ENCODE measurements at regions of chr7 and their contacts with region 1.

Region 1: GRCh38 chr7:32891800-32892520 is 400 bp upstream of the KBTBD2 start:
- DNase-seq: peak; percentile 96 to 99
- ATAC-seq: peak; percentile 65 to 81 (median 66)
- H3K4me3 ChIP-seq: peak overlapping the region; percentile 80
- H3K4me3 Mint-ChIP-seq: peak overlapping the region; percentile 95
- H3K27ac ChIP-seq: peak overlapping the region; percentile 99
- H3K27ac Mint-ChIP-seq: peak overlapping the region; percentile 96 to 99
- H3K4me1 ChIP-seq: peaks cover 21% of the 10 kb centered on the region
- H3K4me1 Mint-ChIP-seq: peaks cover 51 to 54% of the 10 kb centered on the region in 2 donors
- H3K27me3 ChIP-seq: no peaks in the 10 kb centered on the region
- H3K27me3 Mint-ChIP-seq: peaks cover 0 to 3% of the 10 kb centered on the region in 2 donors
- CTCF ChIP-seq: no peak

Region 2: DNA sequence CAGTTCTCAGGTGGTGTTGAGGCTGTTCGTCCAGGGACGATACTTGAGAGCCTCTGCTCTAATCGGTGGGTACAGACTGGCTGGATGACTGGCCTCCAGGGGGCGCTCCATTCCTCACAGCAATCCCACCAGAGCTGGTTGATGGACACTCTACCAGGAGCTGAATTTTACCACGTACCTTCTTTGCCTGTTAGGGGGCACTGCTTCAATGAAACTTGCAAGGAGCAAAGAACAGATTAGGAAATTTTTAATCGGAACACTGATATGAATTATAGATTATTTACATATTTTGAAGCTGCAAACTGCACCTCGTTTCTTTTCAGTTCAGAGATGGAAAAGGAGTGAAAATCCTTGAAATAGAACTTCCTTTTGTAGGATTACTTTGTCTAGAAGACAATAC is 45.3 kb before region 1 on chr7:
- intact Hi-C with region 1: loop called (anchors 5 kb)
- DNase-seq: peak; percentile 86 to 94
- ATAC-seq: peak; percentile 100
- H3K4me3 ChIP-seq: no peak overlapping the region
- H3K4me3 Mint-ChIP-seq: no peak overlapping the region
- H3K27ac ChIP-seq: no peak overlapping the region
- H3K27ac Mint-ChIP-seq: peak overlapping the region in 1 of 2 donors; percentile 44
- H3K4me1 ChIP-seq: peaks cover 4% of the 10 kb centered on the region
- H3K4me1 Mint-ChIP-seq: peaks cover 7 to 8% of the 10 kb centered on the region in 2 donors
- H3K27me3 ChIP-seq: peaks cover 2% of the 10 kb centered on the region
- H3K27me3 Mint-ChIP-seq: peaks cover 16 to 27% of the 10 kb centered on the region in 2 donors
- CTCF ChIP-seq: peak; percentile 87

Region 3: DNA sequence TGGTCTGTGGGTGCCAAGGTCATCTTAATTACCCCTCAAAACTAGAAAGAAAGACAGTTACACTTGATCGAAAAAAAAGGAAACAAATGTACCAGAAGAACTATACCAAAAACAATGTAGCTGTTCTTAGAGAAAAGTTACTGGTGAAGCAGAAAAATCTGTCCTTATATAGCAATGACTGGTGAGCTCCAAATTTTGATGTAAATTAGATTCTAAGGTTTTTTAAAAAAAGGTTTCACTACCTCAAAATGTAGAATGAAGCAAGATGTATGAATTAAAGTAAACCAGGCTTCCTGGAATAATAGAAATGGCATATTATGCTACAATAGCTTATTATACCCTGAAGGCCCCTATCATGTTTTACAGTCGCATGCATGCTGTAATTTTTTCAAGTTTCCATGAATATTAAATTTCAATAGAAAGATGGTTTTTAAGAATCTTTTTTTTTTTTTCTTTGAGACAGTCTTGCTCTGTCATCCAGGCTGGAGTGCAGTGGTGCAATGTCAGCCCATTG is 36.9 kb after region 1 on chr7:
- intact Hi-C with region 1: no loop called
- DNase-seq: no peak
- ATAC-seq: no peak
- H3K4me3 ChIP-seq: no peak overlapping the region
- H3K4me3 Mint-ChIP-seq: no peak overlapping the region
- H3K27ac ChIP-seq: no peak overlapping the region
- H3K27ac Mint-ChIP-seq: no peak overlapping the region
- H3K4me1 ChIP-seq: no peaks in the 10 kb centered on the region
- H3K4me1 Mint-ChIP-seq: no peaks in the 10 kb centered on the region
- H3K27me3 ChIP-seq: no peaks in the 10 kb centered on the region
- H3K27me3 Mint-ChIP-seq: no peaks in the 10 kb centered on the region
- CTCF ChIP-seq: no peak

Region 4: DNA sequence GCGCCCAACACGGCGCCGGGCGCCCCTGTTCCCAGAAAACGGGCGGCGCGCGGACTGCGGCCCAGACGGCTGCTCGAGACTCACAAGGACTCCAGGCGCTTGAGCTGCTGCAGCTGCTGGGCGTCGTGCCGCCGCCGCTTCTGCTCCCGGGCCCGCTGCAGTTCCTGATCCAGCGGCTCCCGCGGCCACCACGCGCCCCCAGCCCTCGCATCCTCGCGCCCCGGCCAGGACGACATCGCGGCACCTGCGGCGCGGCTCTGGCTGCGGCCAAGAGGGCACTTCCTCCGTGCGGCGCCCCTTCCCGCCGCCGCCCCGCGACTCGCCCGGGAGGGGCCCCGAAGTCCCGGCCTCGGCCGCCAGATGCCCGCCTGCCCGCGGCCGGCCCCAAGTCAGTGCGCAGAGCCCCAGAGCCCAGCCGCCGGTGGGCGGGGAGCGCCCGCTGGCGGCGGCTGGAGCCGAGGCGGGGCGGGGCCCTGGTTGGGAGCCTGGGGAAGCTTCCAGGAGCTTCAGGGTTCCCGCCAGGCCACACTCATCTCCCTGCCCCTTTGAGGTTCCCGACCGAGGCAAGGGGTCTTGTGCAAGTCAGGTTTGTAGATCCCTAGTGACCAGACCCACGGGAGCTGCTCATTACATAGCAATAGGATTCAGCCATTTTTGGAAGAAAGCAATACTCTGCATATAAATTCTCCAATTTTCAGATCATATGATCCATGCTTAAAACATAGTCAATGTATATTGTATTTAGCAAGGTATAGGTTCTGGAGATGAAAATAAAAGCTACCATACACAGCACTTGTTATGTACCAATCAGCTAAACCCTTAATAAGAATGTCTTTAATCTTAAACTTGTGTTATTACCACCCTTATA is 51.1 kb after region 1 on chr7:
- intact Hi-C with region 1: loop called (anchors 5 kb)
- DNase-seq: peak; percentile 61 to 82
- ATAC-seq: peak; percentile 90 to 92 (median 92)
- H3K4me3 ChIP-seq: peak overlapping the region; percentile 66
- H3K4me3 Mint-ChIP-seq: peak overlapping the region; percentile 97
- H3K27ac ChIP-seq: peak overlapping the region; percentile 57
- H3K27ac Mint-ChIP-seq: peak overlapping the region in 1 of 2 donors; percentile 78
- H3K4me1 ChIP-seq: peaks cover 11% of the 10 kb centered on the region
- H3K4me1 Mint-ChIP-seq: peaks cover 11 to 16% of the 10 kb centered on the region in 2 donors
- H3K27me3 ChIP-seq: no peaks in the 10 kb centered on the region
- H3K27me3 Mint-ChIP-seq: peaks cover under 1 to 12% of the 10 kb centered on the region in 2 donors
- CTCF ChIP-seq: peak; percentile 61

Region 5: DNA sequence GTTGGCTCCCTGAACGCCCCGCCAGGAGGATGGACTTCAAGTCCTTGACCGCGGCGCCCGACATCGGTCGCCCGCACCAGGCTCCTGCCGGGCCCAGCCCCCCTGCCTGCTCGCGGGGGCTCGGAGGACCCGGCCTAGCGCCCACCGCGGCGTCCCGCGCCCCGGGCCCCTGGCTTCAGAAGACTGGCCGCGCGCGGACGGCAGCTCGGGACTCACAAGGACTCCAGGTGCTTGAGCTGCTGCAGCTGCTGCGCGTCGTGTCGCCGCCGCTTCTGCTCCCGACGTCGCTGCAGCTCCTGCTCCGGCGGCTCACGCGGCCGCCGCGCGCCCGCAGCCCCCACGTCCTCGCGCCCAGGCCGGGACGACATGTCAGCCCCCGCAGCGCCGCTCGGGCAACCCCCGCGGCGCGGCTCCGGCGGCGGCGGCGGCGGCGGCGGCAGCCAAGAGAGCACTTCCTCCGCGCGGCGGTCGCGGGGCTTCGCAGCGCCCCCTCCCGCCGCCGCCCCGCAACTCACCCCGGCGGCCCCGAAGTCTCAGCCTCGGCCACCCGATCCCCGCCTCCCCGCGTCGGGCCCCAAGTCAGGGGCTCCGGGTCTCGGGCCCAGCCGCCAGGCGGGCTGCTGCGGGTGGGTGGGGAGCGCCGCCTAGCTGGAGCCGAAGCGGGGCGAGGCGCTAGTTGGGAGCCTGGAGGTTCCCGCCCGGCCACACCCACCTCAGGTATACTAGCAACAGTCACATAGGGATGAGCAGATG is 217.2 kb after region 1 on chr7 and contains the start of gene RP9:
- intact Hi-C with region 1: loop called (anchors 5 kb)
- DNase-seq: peak; percentile 74 to 87
- ATAC-seq: peak; percentile 89 to 96 (median 94)
- H3K4me3 ChIP-seq: peak within 1 kb of the TSS; percentile 59
- H3K4me3 Mint-ChIP-seq: peak within 1 kb of the TSS; percentile 91
- H3K27ac ChIP-seq: peak within 1 kb of the TSS; percentile 51
- H3K27ac Mint-ChIP-seq: peak within 1 kb of the TSS; percentile 79 to 80
- H3K4me1 ChIP-seq: peaks cover 22% of the 10 kb centered on the region
- H3K4me1 Mint-ChIP-seq: peaks cover 34 to 39% of the 10 kb centered on the region in 2 donors
- H3K27me3 ChIP-seq: no peaks in the 10 kb centered on the region
- H3K27me3 Mint-ChIP-seq: peaks cover 23 to 30% of the 10 kb centered on the region in 2 donors
- CTCF ChIP-seq: peak; percentile 52
- total RNA-seq, gene RP9: 19.1 to 27.6 (median 21.9) TPM